B cell (primary cell): ENCODE measurements at regions of chr22 and their contacts with region 1.

Region 1: GRCh38 chr22:36977947-36978660 is 41.1 kb downstream of the TST start:
- DNase-seq: peak; percentile 91
- ATAC-seq: peak; percentile 86
- H3K4me3 ChIP-seq: peak overlapping the region; percentile 55 to 93 (median 73)
- H3K4me3 Mint-ChIP-seq: peak overlapping the region; percentile 98
- H3K27ac ChIP-seq: peak overlapping the region; percentile 5 to 71
- H3K27ac Mint-ChIP-seq: peak overlapping the region; percentile 96
- H3K4me1 ChIP-seq: peaks cover 0 to 11% of the 10 kb centered on the region in 2 donors
- H3K4me1 Mint-ChIP-seq: peaks cover 9% of the 10 kb centered on the region
- H3K27me3 ChIP-seq: peaks cover 0 to 6% (median 0%) of the 10 kb centered on the region in 4 experiments
- H3K27me3 Mint-ChIP-seq: no peaks in the 10 kb centered on the region
- CTCF ChIP-seq: peak; percentile 81

Region 2: GRCh38 chr22:36528795-36529751 is 449.0 kb before region 1 on chr22 and contains the start of gene EIF3D:
- CTCF ChIA-PET with region 1: interaction called, 3 read pairs
- POLR2A ChIA-PET with region 1: no interaction called
- intact Hi-C with region 1: loop called (anchors 5 kb)
- DNase-seq: peak; percentile 100
- ATAC-seq: peak; percentile 92
- H3K4me3 ChIP-seq: peak within 1 kb of the TSS; percentile 80 to 97 (median 88)
- H3K4me3 Mint-ChIP-seq: peak within 1 kb of the TSS; percentile 98
- H3K27ac ChIP-seq: peak within 1 kb of the TSS; percentile 88 to 93
- H3K27ac Mint-ChIP-seq: peak within 1 kb of the TSS; percentile 98
- H3K4me1 ChIP-seq: peaks cover 13 to 24% of the 10 kb centered on the region in 2 donors
- H3K4me1 Mint-ChIP-seq: peaks cover 28% of the 10 kb centered on the region
- H3K27me3 ChIP-seq: no peaks in the 10 kb centered on the region
- H3K27me3 Mint-ChIP-seq: no peaks in the 10 kb centered on the region
- CTCF ChIP-seq: no peak
- total RNA-seq, gene EIF3D: 257 and 274 TPM in 2 replicates

Region 3: DNA sequence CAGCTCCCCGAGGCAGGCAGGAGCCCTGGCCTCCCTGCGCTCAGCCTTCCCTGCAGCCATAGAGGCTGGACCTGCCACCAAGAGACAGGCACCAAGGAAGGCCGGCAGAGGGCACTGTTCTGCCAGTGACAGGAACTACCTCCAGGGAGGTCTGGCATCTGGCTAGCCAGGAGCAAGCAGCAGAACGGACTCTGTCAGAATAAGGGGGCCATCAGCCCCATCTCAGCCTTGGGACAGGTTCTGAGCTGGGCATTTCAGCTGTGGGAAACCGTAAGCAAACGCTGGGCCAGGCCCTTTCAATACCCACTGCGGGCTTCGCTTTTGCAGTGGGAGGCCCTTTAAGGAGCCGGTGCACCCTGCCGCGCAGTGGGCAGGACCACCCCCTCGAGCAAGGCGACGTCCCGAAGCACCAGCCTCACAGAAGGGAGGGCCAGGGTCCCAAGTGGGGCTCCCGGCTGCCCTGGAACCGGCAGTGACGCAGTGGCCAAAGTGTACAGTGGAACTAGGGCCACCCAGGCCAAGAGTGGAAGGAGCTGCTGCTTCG is 220.4 kb before region 1 on chr22:
- CTCF ChIA-PET with region 1: interaction called, 62 read pairs
- POLR2A ChIA-PET with region 1: no interaction called
- intact Hi-C with region 1: no loop called
- DNase-seq: peak; percentile 77
- ATAC-seq: peak; percentile 93
- H3K4me3 ChIP-seq: no peak overlapping the region
- H3K4me3 Mint-ChIP-seq: no peak overlapping the region
- H3K27ac ChIP-seq: no peak overlapping the region
- H3K27ac Mint-ChIP-seq: no peak overlapping the region
- H3K4me1 ChIP-seq: no peaks in the 10 kb centered on the region
- H3K4me1 Mint-ChIP-seq: no peaks in the 10 kb centered on the region
- H3K27me3 ChIP-seq: peaks cover 0 to 20% (median 1%) of the 10 kb centered on the region in 4 experiments
- H3K27me3 Mint-ChIP-seq: peaks cover 18% of the 10 kb centered on the region
- CTCF ChIP-seq: peak; percentile 84

Region 4: GRCh38 chr22:36781656-36782627 is 196.2 kb before region 1 on chr22:
- CTCF ChIA-PET with region 1: interaction called, 40 read pairs
- POLR2A ChIA-PET with region 1: interaction called, 8 read pairs
- intact Hi-C with region 1: loop called (anchors 1 kb)
- DNase-seq: peak; percentile 86
- ATAC-seq: peak; percentile 97
- H3K4me3 ChIP-seq: no peak overlapping the region
- H3K4me3 Mint-ChIP-seq: peak overlapping the region; percentile 75
- H3K27ac ChIP-seq: no peak overlapping the region
- H3K27ac Mint-ChIP-seq: peak overlapping the region; percentile 96
- H3K4me1 ChIP-seq: peaks cover under 1 to 16% of the 10 kb centered on the region in 2 donors
- H3K4me1 Mint-ChIP-seq: peaks cover 13% of the 10 kb centered on the region
- H3K27me3 ChIP-seq: peaks cover 0 to 6% (median 0%) of the 10 kb centered on the region in 4 experiments
- H3K27me3 Mint-ChIP-seq: peaks cover 18% of the 10 kb centered on the region
- CTCF ChIP-seq: peak; percentile 96

Region 5: DNA sequence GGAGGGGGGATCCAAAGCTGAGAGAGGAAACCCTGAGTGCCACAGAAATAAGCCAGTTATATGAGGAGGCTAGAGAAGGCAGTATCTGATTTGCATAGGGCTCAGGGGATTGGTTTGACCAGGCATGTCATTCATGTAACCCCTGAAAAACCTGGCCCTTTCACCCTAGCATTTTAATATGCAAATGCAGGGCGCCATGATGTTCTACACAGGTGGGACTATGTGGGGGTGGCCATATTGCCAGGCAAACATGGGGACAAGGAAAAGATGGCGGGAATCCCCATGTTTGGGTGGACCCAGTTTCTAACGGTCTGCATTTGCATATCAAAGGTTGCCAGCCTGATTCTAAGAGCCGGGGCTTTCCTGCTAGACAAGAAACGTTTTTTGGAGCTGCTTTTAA is 37.4 kb before region 1 on chr22:
- CTCF ChIA-PET with region 1: interaction called, 10 read pairs
- POLR2A ChIA-PET with region 1: no interaction called
- intact Hi-C with region 1: no loop called
- DNase-seq: peak; percentile 76
- ATAC-seq: peak; percentile 84
- H3K4me3 ChIP-seq: peak overlapping the region in 2 of 5 experiments; percentile 26 to 45
- H3K4me3 Mint-ChIP-seq: peak overlapping the region; percentile 67
- H3K27ac ChIP-seq: peak overlapping the region; percentile 47 to 72
- H3K27ac Mint-ChIP-seq: peak overlapping the region; percentile 85
- H3K4me1 ChIP-seq: peaks cover 3 to 22% of the 10 kb centered on the region in 2 donors
- H3K4me1 Mint-ChIP-seq: peaks cover 36% of the 10 kb centered on the region
- H3K27me3 ChIP-seq: no peaks in the 10 kb centered on the region
- H3K27me3 Mint-ChIP-seq: no peaks in the 10 kb centered on the region
- CTCF ChIP-seq: no peak

Region 6: DNA sequence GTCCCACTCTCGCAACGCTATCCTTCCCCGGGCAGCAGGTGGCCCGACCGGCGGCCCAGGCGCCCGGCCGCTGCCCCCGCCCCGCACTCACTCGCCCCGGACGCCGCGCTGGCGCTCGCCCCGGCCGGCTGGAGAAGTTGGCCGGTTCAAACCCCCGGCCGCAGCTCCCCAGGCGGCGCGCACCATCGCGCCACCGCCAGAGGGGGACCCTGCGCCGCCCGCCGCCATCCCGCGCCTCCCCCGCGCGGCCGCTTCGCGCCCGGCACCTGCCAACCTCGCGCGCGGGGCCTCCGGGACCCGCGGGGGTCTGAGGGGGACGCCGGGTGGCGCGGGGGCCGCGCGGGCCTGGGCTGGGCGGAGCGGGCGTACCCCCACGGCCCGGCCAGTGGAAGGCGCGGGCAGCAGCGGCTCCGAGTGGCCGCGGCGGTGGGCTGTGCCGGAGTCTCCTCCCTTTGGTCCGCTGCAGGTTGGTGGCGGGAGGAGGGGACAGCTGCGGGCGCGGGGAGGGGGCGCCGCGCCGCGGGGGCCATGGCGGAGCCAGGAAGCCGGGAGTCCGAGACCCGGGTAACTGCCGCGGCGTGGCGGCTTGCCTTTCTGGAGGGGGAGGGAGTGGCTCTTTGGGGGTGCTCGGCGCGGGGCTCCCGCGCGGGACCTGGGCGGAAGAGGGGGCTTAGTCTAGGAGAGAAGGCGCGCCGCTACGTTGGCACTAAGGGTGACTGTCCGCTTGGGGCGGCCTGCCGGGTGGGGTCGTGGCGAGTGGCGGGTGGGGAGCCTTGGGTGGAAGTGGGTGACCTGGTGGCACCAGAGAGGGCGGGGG is 41.4 kb after region 1 on chr22 and contains the starts of genes MPST and TST:
- CTCF ChIA-PET with region 1: interaction called, 7 read pairs
- POLR2A ChIA-PET with region 1: no interaction called
- intact Hi-C with region 1: loop called (anchors 1 kb)
- DNase-seq: peak; percentile 71
- ATAC-seq: peak; percentile 81
- H3K4me3 ChIP-seq: peak within 1 kb of the TSS; percentile 46 to 71 (median 65)
- H3K4me3 Mint-ChIP-seq: peak within 1 kb of the TSS; percentile 93
- H3K27ac ChIP-seq: peak within 1 kb of the TSS in 1 of 2 donors; percentile 46
- H3K27ac Mint-ChIP-seq: peak within 1 kb of the TSS; percentile 87
- H3K4me1 ChIP-seq: peaks cover 9 to 20% of the 10 kb centered on the region in 2 donors
- H3K4me1 Mint-ChIP-seq: peaks cover 20% of the 10 kb centered on the region
- H3K27me3 ChIP-seq: no peaks in the 10 kb centered on the region
- H3K27me3 Mint-ChIP-seq: no peaks in the 10 kb centered on the region
- CTCF ChIP-seq: peak; percentile 7
- total RNA-seq, gene MPST: 17.7 and 19.5 TPM in 2 replicates
- total RNA-seq, gene TST: 5.9 and 6.2 TPM in 2 replicates